ENCODE measurements at regions of chr9 and their contacts with region 1.

Region 1: DNA sequence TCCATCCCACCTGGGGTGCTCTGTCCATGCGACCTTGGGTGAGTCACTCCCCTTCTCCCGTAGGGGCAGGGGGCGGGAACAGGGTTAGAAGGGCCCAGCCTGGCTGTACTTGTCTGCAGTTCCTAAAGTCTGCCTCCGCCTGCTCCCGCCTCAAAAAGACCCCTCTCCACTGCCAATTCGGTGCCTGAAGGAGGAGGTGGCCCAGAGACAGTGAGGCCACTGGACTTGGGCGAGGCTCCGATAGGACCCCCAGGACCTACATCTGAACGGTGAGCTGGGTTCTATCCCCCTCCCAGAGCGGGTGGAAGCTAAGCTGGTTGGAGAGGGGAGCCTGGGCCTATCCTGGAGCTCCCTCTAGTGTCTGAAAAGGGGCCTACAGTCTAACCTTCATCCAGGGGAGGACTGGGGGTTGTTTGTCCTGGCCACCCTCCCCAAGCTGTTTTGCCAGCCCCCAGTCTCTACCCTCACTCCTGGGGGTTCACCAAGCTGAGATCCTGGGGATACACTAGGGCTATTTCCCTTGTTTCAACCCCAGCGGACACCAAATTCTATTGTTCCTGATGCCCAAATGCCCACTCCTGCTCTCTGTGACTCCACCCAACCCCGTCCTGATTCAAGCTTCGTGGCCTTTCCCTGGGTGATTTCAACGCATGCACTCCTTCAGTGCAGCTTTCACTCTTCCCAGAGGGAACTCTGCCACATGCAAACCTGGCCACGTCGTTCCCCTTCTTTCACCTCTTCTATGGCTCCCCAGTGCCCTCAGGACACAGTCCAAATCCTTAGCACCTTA is 6.1 kb upstream of the CRB2 start:
- DNase-seq: no peak
- H3K4me3 ChIP-seq: no peak overlapping the region
- H3K27ac ChIP-seq: no peak overlapping the region
- H3K4me1 ChIP-seq: no peaks in the 10 kb centered on the region
- H3K27me3 ChIP-seq: no peaks in the 10 kb centered on the region
- CTCF ChIP-seq: peak; percentile 87 to 96 (median 90)

Region 2: GRCh38 chr9:122464633-122465567 is 885.0 kb before region 1 on chr9:
- intact Hi-C with region 1: loop called (anchors 10 kb)
- DNase-seq: peak; percentile 16 to 88
- H3K4me3 ChIP-seq: peak overlapping the region; percentile 44 to 57
- H3K27ac ChIP-seq: no peak overlapping the region
- H3K4me1 ChIP-seq: no peaks in the 10 kb centered on the region
- H3K27me3 ChIP-seq: no peaks in the 10 kb centered on the region
- CTCF ChIP-seq: peak; percentile 55 to 75 (median 55)

Region 3: GRCh38 chr9:123027517-123027916 is 322.4 kb before region 1 on chr9:
- intact Hi-C with region 1: loop called (anchors 10 kb)
- DNase-seq: no peak
- H3K4me3 ChIP-seq: no peak overlapping the region
- H3K27ac ChIP-seq: no peak overlapping the region
- H3K4me1 ChIP-seq: no peaks in the 10 kb centered on the region
- H3K27me3 ChIP-seq: no peaks in the 10 kb centered on the region
- CTCF ChIP-seq: no peak

Region 4: DNA sequence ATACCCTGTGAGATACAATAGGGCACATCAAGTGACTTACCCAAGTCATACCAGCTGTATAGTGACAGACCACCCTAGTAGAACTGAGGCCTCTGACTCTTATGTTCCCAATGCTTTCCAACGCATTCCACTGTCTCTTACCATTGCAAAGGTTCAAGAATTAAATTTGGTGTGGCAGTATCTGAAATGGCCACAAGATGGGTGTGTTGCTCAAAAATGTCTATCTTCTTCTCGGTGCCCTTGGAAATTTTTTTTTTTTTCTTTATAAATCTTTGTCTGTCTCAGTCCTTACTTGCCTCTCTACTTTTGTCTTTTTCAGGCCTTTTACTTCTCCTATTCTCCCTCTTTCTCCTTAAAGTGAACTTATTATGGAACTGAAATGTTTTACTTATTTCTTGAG is 268.1 kb before region 1 on chr9:
- intact Hi-C with region 1: loop called (anchors 5 kb)
- DNase-seq: no peak
- H3K4me3 ChIP-seq: no peak overlapping the region
- H3K27ac ChIP-seq: no peak overlapping the region
- H3K4me1 ChIP-seq: no peaks in the 10 kb centered on the region
- H3K27me3 ChIP-seq: no peaks in the 10 kb centered on the region
- CTCF ChIP-seq: peak; percentile 21 to 58 (median 48)

Region 5: GRCh38 chr9:123523001-123523400 is 173.1 kb after region 1 on chr9:
- intact Hi-C with region 1: no loop called
- DNase-seq: no peak
- H3K4me3 ChIP-seq: no peak overlapping the region
- H3K27ac ChIP-seq: no peak overlapping the region
- H3K4me1 ChIP-seq: no peaks in the 10 kb centered on the region
- H3K27me3 ChIP-seq: no peaks in the 10 kb centered on the region
- CTCF ChIP-seq: no peak